Activated CD4-positive, alpha-beta memory T cell treated with anti-CD3 and anti-CD28 coated beads, Interleukin-2, amount 10 ng/mL, durations not matched to agents 7 days and 5 days (primary cell): ENCODE measurements at regions of chr14 and their contacts with region 1.

Region 1: GRCh38 chr14:69625299-69626131 is 14.1 kb downstream of the SUSD6 start:
- DNase-seq: peak; percentile 87
- H3K4me3 Mint-ChIP-seq: peak overlapping the region; percentile 56
- H3K27ac Mint-ChIP-seq: peak overlapping the region; percentile 97
- H3K4me1 Mint-ChIP-seq: peaks cover 91% of the 10 kb centered on the region
- H3K27me3 Mint-ChIP-seq: no peaks in the 10 kb centered on the region

Region 2: GRCh38 chr14:69593018-69593677 is 32.4 kb before region 1 on chr14:
- CTCF ChIA-PET with region 1: no interaction called
- POLR2A ChIA-PET with region 1: no interaction called
- DNase-seq: no peak
- H3K4me3 Mint-ChIP-seq: no peak overlapping the region
- H3K27ac Mint-ChIP-seq: no peak overlapping the region
- H3K4me1 Mint-ChIP-seq: no peaks in the 10 kb centered on the region
- H3K27me3 Mint-ChIP-seq: peaks cover 4% of the 10 kb centered on the region

Region 3: GRCh38 chr14:69637503-69638030 is 12.1 kb after region 1 on chr14:
- CTCF ChIA-PET with region 1: interaction called, 6 read pairs
- POLR2A ChIA-PET with region 1: interaction called, 19 read pairs
- DNase-seq: no peak
- H3K4me3 Mint-ChIP-seq: peak overlapping the region; percentile 50
- H3K27ac Mint-ChIP-seq: peak overlapping the region; percentile 89
- H3K4me1 Mint-ChIP-seq: peaks cover 83% of the 10 kb centered on the region
- H3K27me3 Mint-ChIP-seq: no peaks in the 10 kb centered on the region

Region 4: DNA sequence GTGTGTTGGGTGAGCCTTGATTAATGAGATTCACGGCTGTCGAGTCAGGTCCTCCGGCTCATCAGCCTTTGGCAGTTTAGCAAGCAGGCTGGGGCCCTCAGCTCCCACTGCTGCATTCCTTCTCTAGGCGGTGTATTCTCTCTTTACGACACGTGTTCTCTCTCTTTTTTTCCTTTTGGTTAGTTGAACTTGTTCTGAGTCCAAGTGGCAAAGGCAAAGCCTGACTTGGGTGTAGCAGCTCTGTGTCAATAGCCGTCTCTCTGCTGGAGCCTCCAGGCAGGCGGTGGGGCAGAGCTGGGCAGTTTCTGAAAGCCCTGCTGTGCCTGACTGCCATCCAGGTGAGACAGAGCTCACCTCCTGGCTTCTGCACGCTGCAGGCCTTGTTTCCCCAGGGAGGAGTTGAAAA is 32.4 kb after region 1 on chr14:
- CTCF ChIA-PET with region 1: no interaction called
- POLR2A ChIA-PET with region 1: interaction called, 10 read pairs
- DNase-seq: no peak
- H3K4me3 Mint-ChIP-seq: peak overlapping the region; percentile 26
- H3K27ac Mint-ChIP-seq: peak overlapping the region; percentile 61
- H3K4me1 Mint-ChIP-seq: peaks cover 93% of the 10 kb centered on the region
- H3K27me3 Mint-ChIP-seq: no peaks in the 10 kb centered on the region

Region 5: GRCh38 chr14:69673578-69674305 is 48.2 kb after region 1 on chr14:
- CTCF ChIA-PET with region 1: interaction called, 5 read pairs
- POLR2A ChIA-PET with region 1: interaction called, 18 read pairs
- DNase-seq: no peak
- H3K4me3 Mint-ChIP-seq: peak overlapping the region; percentile 31
- H3K27ac Mint-ChIP-seq: peak overlapping the region; percentile 95
- H3K4me1 Mint-ChIP-seq: peaks cover 89% of the 10 kb centered on the region
- H3K27me3 Mint-ChIP-seq: no peaks in the 10 kb centered on the region

Region 6: GRCh38 chr14:69685716-69686115 is 60.2 kb after region 1 on chr14:
- CTCF ChIA-PET with region 1: interaction called, 4 read pairs
- POLR2A ChIA-PET with region 1: interaction called, 13 read pairs
- DNase-seq: peak; percentile 60
- H3K4me3 Mint-ChIP-seq: peak overlapping the region; percentile 47
- H3K27ac Mint-ChIP-seq: peak overlapping the region; percentile 88
- H3K4me1 Mint-ChIP-seq: peaks cover 80% of the 10 kb centered on the region
- H3K27me3 Mint-ChIP-seq: no peaks in the 10 kb centered on the region

Region 7: GRCh38 chr14:69812714-69813113 is 187.2 kb after region 1 on chr14:
- CTCF ChIA-PET with region 1: no interaction called
- POLR2A ChIA-PET with region 1: no interaction called
- DNase-seq: no peak
- H3K4me3 Mint-ChIP-seq: no peak overlapping the region
- H3K27ac Mint-ChIP-seq: no peak overlapping the region
- H3K4me1 Mint-ChIP-seq: no peaks in the 10 kb centered on the region
- H3K27me3 Mint-ChIP-seq: peaks cover 20% of the 10 kb centered on the region

Region 8: GRCh38 chr14:70281939-70282338 is 656.4 kb after region 1 on chr14:
- CTCF ChIA-PET with region 1: no interaction called
- POLR2A ChIA-PET with region 1: no interaction called
- DNase-seq: no peak
- H3K4me3 Mint-ChIP-seq: no peak overlapping the region
- H3K27ac Mint-ChIP-seq: no peak overlapping the region
- H3K4me1 Mint-ChIP-seq: no peaks in the 10 kb centered on the region
- H3K27me3 Mint-ChIP-seq: peaks cover 5% of the 10 kb centered on the region